ENCODE measurements at regions of chr3 and their contacts with region 1.

Region 1: DNA sequence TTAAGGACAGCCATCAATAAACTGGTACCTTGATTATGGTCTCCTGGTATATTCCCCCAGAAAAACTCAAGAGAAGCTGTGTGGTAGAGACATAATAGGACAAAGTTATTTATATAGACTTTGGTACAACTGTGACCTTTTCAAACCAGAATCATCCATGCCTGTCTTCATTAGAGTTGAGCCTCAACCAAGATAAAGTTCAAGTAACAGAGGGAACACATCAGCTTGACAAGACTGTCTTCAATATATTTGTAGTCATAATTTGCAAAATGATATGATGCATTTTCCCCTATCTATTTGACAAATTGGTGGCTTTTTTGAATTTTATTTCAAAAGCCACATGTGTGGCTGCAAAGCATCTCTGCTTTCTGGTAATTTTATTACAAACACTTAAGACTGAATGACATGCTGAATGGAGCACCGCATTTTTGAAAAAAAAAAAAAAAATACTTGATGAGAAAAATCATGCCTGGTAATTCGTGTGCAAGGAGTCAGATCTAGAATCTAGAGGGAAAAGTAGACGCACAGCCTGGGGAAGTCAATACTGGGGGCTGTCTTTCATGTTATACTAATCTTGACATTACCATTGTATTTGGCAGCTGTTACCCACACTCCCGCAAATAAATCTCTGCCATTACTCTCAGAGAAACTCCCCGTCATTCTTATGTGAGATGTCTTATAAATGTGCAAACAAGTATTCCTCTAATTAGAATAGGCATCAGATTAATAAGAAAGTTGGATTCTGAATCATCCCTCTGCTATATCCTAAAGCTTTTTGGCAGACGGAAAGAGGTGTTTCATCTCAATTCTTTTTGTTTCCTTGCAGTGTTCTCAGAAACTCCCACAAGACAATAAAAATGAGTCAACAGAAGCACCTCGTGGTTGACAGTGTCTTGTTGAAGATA is 554.8 kb upstream of the CBLB start:
- DNase-seq: peak; percentile 45
- ATAC-seq: peak; percentile 63
- H3K4me3 Mint-ChIP-seq: peak overlapping the region; percentile 41
- H3K27ac Mint-ChIP-seq: peak overlapping the region; percentile 82
- H3K4me1 Mint-ChIP-seq: peaks cover 46% of the 10 kb centered on the region
- H3K27me3 Mint-ChIP-seq: no peaks in the 10 kb centered on the region
- CTCF ChIP-seq: no peak

Region 2: DNA sequence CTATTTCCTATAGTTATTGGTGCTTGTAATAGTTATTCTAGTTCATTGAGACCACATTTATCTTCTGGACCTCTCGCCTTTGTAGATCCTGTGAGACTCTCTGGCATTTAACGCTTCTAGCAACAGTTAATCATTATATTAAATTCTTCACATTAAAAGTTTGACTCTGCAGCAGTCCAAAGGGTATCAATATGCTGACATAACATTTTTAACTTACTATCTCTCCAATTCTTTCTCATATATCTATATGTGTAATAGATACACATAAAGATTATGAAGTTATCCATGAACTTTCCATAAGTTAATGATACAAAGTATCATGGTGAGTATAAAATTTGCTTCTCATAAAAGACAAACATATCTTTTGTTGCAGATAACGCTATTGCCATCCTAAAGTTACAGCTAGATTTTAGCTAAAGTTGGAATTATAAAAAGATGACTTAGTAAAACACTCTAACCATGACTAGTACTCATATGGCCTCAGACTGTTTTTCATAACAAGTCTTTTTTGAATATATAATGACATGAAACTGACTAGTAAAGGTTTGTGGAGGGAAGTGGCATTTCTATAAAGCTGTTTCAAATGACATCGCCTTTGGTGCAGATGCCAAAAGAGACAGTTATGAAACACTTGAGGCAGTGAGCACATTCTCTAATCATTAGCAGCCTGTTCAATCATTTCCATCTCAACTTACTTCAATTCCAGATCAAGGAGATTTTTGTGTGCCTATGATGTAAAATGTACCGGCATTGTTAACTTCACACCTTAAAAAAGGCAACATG is 175.5 kb before region 1 on chr3:
- CTCF ChIA-PET with region 1: no interaction called
- POLR2A ChIA-PET with region 1: no interaction called
- intact Hi-C with region 1: no loop called
- DNase-seq: peak; percentile 21
- ATAC-seq: peak; percentile 92
- H3K4me3 Mint-ChIP-seq: no peak overlapping the region
- H3K27ac Mint-ChIP-seq: peak overlapping the region; percentile 50
- H3K4me1 Mint-ChIP-seq: peaks cover 17% of the 10 kb centered on the region
- H3K27me3 Mint-ChIP-seq: no peaks in the 10 kb centered on the region
- CTCF ChIP-seq: no peak

Region 3: GRCh38 chr3:106473576-106474475 is 50.3 kb after region 1 on chr3:
- CTCF ChIA-PET with region 1: no interaction called
- POLR2A ChIA-PET with region 1: no interaction called
- intact Hi-C with region 1: loop called (anchors 1 kb)
- DNase-seq: peak; percentile 2
- ATAC-seq: peak; percentile 81
- H3K4me3 Mint-ChIP-seq: no peak overlapping the region
- H3K27ac Mint-ChIP-seq: peak overlapping the region; percentile 77
- H3K4me1 Mint-ChIP-seq: peaks cover 16% of the 10 kb centered on the region
- H3K27me3 Mint-ChIP-seq: no peaks in the 10 kb centered on the region
- CTCF ChIP-seq: no peak